ENCODE measurements at regions of chr5 and their contacts with region 1.

Region 1: GRCh38 chr5:75351139-75351926 is 14.3 kb downstream of the HMGCR start:
- DNase-seq: no peak
- H3K4me3 ChIP-seq: no peak overlapping the region
- H3K27ac ChIP-seq: no peak overlapping the region
- H3K4me1 ChIP-seq: no peaks in the 10 kb centered on the region
- H3K27me3 ChIP-seq: no peaks in the 10 kb centered on the region
- CTCF ChIP-seq: no peak

Region 2: GRCh38 chr5:75156585-75156984 is 194.7 kb before region 1 on chr5:
- intact Hi-C with region 1: no loop called
- DNase-seq: no peak
- H3K4me3 ChIP-seq: no peak overlapping the region
- H3K27ac ChIP-seq: no peak overlapping the region
- H3K4me1 ChIP-seq: no peaks in the 10 kb centered on the region
- H3K27me3 ChIP-seq: no peaks in the 10 kb centered on the region
- CTCF ChIP-seq: no peak

Region 3: GRCh38 chr5:75509956-75510355 is 158.6 kb after region 1 on chr5:
- intact Hi-C with region 1: loop called (anchors 10 kb)
- DNase-seq: peak; percentile 20
- H3K4me3 ChIP-seq: peak overlapping the region; percentile 87
- H3K27ac ChIP-seq: peak overlapping the region; percentile 91
- H3K4me1 ChIP-seq: peaks cover 6% of the 10 kb centered on the region
- H3K27me3 ChIP-seq: no peaks in the 10 kb centered on the region
- CTCF ChIP-seq: no peak